ENCODE measurements at regions of chr14 and their contacts with region 1.

Region 1: GRCh38 chr14:89303457-89304435 is 113.3 kb downstream of the FOXN3 start:
- DNase-seq: peak; percentile 83
- H3K4me3 ChIP-seq: peak overlapping the region in 1 of 3 experiments; percentile 24
- H3K27ac ChIP-seq: peak overlapping the region; percentile 71
- H3K4me1 ChIP-seq: peaks cover 40% of the 10 kb centered on the region
- H3K27me3 ChIP-seq: no peaks in the 10 kb centered on the region
- CTCF ChIP-seq: no peak
- POLR2A ChIP-seq: no peak

Region 2: DNA sequence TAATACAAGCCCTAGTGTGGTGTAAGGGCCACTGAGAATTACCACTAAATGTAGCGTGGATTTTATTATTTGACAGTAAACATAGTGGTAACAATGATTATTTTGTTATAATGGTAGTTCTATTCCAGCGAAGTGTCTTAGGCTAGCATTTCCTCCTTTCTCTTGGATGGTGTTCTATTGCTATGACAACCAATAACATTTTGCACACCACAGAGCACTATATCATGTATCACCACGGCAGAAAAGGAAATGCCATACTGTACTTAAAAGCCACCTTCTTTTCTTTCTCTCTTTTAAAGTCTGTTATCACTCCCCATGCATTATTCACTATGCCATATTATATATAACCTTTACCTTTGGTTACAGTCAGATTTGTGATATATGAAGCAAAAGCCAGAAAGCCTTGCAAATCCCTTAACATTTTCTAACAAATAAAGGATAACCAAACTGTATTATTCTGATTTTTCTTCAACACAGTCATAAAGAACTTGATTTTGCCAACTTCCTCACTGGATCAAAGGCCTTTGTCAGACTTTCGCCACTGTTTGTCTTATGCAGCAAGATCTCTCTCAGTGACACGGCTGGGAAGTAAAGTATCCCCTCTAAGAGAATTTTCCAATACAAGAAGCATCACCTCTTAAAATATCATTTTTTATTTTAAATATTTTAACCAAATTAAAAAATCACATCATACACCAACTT is 82.5 kb before region 1 on chr14:
- CTCF ChIA-PET with region 1: no interaction called
- POLR2A ChIA-PET with region 1: no interaction called
- dilution Hi-C with region 1: no loop called
- intact Hi-C with region 1: loop called (anchors 2 kb)
- DNase-seq: peak; percentile 86
- H3K4me3 ChIP-seq: no peak overlapping the region
- H3K27ac ChIP-seq: peak overlapping the region; percentile 70
- H3K4me1 ChIP-seq: peaks cover 4% of the 10 kb centered on the region
- H3K27me3 ChIP-seq: no peaks in the 10 kb centered on the region
- CTCF ChIP-seq: no peak
- POLR2A ChIP-seq: no peak

Region 3: DNA sequence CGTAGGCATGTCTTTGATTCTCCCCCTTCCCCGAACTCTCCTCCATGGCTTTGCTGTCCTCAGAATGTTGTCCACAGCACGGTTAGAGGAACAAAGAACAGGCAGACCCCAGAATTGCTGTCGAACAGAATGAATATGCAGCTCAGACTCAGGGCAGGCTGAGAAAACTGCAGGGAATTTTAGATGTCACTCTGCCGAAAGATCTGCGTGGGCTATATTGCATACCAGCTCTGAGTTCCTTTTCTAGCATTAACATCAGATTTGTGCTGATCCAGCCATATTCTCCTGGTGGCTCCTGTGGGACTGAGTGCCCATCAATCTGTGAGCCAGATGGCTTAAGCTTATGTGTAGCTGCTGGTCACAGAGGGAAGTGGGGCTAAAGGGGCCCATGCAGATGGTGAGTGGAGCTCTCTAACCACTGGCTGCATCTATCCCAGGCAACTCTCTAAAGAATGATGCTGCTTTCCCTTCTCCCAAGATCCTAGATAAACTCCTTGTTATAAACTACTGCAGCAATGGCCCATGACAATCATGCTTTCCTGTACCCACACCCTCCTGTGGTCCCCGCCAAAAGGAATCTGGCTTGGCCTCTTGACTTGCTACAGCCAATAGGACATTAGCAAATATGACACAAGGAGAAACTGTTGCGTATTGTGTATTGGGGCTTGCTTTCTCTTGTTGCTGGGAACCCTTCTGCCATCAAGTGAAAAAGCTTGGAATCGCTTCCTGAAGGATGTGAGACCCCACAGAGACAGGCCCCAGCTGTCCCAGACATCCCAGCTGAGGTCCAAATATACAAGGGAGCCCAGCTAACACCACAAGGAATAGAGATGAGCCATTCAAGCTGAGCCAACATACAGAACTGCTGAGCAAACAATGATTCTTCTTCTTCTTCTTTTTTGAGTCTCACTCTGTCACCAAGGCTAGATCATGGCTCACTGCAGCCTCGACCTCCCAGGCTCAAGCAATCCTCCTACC is 12.0 kb after region 1 on chr14:
- CTCF ChIA-PET with region 1: interaction called, 11 read pairs
- POLR2A ChIA-PET with region 1: no interaction called
- dilution Hi-C with region 1: no loop called
- intact Hi-C with region 1: no loop called
- DNase-seq: no peak
- H3K4me3 ChIP-seq: no peak overlapping the region
- H3K27ac ChIP-seq: no peak overlapping the region
- H3K4me1 ChIP-seq: no peaks in the 10 kb centered on the region
- H3K27me3 ChIP-seq: no peaks in the 10 kb centered on the region
- CTCF ChIP-seq: no peak
- POLR2A ChIP-seq: no peak

Region 4: GRCh38 chr14:89430391-89431236 is 126.9 kb after region 1 on chr14:
- CTCF ChIA-PET with region 1: no interaction called
- POLR2A ChIA-PET with region 1: no interaction called
- dilution Hi-C with region 1: no loop called
- intact Hi-C with region 1: no loop called
- DNase-seq: no peak
- H3K4me3 ChIP-seq: peak overlapping the region in 1 of 3 experiments; percentile 7
- H3K27ac ChIP-seq: peak overlapping the region; percentile 0
- H3K4me1 ChIP-seq: peaks cover 21% of the 10 kb centered on the region
- H3K27me3 ChIP-seq: no peaks in the 10 kb centered on the region
- CTCF ChIP-seq: no peak
- POLR2A ChIP-seq: no peak

Measured in endothelial cell of umbilical vein (primary cell).